Astrocyte of the cerebellum (primary cell): ENCODE measurements at regions of chr20 and their contacts with region 1.

Region 1: GRCh38 chr20:33686100-33686983 is at the start of gene E2F1:
- DNase-seq: peak; percentile 70
- H3K4me3 ChIP-seq: peak within 1 kb of the TSS; percentile 41
- CTCF ChIP-seq: peak; percentile 30

Region 2: GRCh38 chr20:33568378-33568777 is 118.0 kb before region 1 on chr20:
- in situ Hi-C with region 1: no loop called
- DNase-seq: no peak
- H3K4me3 ChIP-seq: no peak overlapping the region
- CTCF ChIP-seq: no peak

Region 3: GRCh38 chr20:33644785-33645352 is 41.5 kb before region 1 on chr20:
- in situ Hi-C with region 1: no loop called
- DNase-seq: no peak
- H3K4me3 ChIP-seq: no peak overlapping the region
- CTCF ChIP-seq: no peak

Region 4: GRCh38 chr20:33789109-33789854 is 102.9 kb after region 1 on chr20:
- in situ Hi-C with region 1: loop called (anchors 5 kb)
- DNase-seq: peak; percentile 82
- H3K4me3 ChIP-seq: no peak overlapping the region
- CTCF ChIP-seq: no peak